ENCODE measurements at regions of chr14 and their contacts with region 1.

Region 1: DNA sequence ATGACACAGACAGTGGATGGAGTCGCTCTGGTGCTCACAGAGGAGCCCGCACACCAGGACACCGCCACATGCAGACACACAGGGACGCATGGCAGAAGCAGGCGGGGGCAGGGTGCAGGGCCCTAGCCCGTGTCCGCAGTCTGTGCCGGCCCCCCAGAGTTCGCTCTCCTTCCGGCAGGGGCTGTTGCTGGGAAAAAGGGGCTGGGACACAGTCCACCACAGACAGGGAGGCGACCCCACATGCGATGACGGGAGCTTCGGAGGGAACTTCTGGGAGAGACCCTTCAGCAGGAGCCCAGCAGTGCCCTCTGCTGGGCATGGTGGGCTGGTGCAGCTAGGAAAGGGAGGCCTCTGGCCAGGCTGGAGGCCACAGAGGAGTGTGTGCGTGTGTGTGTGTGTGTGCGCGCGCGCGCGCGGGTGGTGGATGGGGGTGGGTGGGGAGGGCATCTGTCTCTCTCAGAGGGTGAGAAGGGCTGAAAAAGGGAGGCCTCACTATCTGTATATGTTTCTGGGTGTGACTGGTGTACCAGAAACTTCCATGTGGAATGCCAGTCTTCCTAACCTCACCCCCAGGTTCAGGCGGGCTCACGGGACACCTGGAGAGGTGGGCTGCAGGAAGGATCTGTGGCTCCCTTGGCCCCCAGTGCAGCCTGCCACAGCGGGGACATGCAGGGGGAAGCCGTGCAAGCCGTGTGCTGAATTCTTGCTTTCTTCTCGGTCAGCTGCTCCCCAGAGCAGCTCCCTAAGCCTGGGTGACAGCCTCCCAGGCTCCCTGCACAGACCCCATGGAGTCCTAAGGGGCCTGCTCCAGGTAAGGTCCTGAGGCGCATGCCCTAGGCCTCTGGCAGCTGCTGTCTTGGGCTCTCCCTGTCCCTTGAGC is 60.7 kb downstream of the PLEKHG3 start:
- DNase-seq: peak; percentile 79
- H3K4me3 ChIP-seq: peak overlapping the region in 2 of 4 donors; percentile 25 to 39
- H3K27ac ChIP-seq: peak overlapping the region in 3 of 4 donors; percentile 0 to 44 (median 23)
- H3K4me1 ChIP-seq: peaks cover 19 to 37% (median 26%) of the 10 kb centered on the region in 4 donors
- H3K27me3 ChIP-seq: no peaks in the 10 kb centered on the region
- CTCF ChIP-seq: peak; percentile 90 to 96 (median 92)
- EP300 ChIP-seq: no peak
- POLR2A ChIP-seq: no peak

Region 2: DNA sequence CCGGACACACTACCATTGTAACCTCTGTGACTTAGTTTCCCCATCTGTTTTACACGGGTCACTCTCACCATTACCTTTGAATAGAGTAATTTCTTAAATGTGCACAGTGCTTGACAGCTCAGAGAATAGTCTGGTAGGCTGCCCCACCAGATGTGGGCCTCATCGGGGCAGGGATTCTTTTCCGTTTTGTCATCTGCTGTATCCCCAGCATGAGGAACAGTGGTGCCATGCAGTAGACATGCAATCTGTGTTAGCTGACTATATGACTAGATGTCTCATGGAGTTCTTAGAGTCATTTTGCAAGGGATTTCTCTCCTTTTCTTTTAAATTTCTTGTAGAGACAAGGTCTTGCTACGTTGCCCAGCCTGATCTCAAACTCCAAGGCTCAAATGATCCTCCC is 105.5 kb before region 1 on chr14:
- in situ Hi-C with region 1: no loop called
- intact Hi-C with region 1: no loop called
- DNase-seq: no peak
- H3K4me3 ChIP-seq: no peak overlapping the region
- H3K27ac ChIP-seq: no peak overlapping the region
- H3K4me1 ChIP-seq: peaks cover 0 to 6% (median 2%) of the 10 kb centered on the region in 4 donors
- H3K27me3 ChIP-seq: no peaks in the 10 kb centered on the region
- CTCF ChIP-seq: no peak
- EP300 ChIP-seq: no peak
- POLR2A ChIP-seq: no peak

Region 3: GRCh38 chr14:64671591-64671990 is 93.3 kb before region 1 on chr14:
- in situ Hi-C with region 1: loop called (anchors 5 to 10 kb)
- intact Hi-C with region 1: loop called (anchors 5 kb)
- DNase-seq: no peak
- H3K4me3 ChIP-seq: no peak overlapping the region
- H3K27ac ChIP-seq: peak overlapping the region in 1 of 4 donors; percentile 25
- H3K4me1 ChIP-seq: peaks cover 3 to 36% (median 20%) of the 10 kb centered on the region in 4 donors
- H3K27me3 ChIP-seq: no peaks in the 10 kb centered on the region
- CTCF ChIP-seq: peak; percentile 61 to 82 (median 68)
- EP300 ChIP-seq: no peak
- POLR2A ChIP-seq: no peak

Measured in transverse colon (tissue), 4 donors.